Endothelial cell of umbilical vein (primary cell): ENCODE measurements at regions of chr13 and their contacts with region 1.

Region 1: GRCh38 chr13:37656247-37656940 is 57.8 kb upstream of the POSTN start:
- DNase-seq: peak; percentile 86
- H3K4me3 ChIP-seq: no peak overlapping the region
- H3K27ac ChIP-seq: peak overlapping the region; percentile 99
- H3K4me1 ChIP-seq: peaks cover 23% of the 10 kb centered on the region
- H3K27me3 ChIP-seq: no peaks in the 10 kb centered on the region
- CTCF ChIP-seq: no peak
- POLR2A ChIP-seq: no peak

Region 2: GRCh38 chr13:37617161-37617560 is 39.2 kb before region 1 on chr13:
- CTCF ChIA-PET with region 1: no interaction called
- POLR2A ChIA-PET with region 1: no interaction called
- dilution Hi-C with region 1: no loop called
- intact Hi-C with region 1: loop called (anchors 2 kb)
- DNase-seq: peak; percentile 59
- H3K4me3 ChIP-seq: no peak overlapping the region
- H3K27ac ChIP-seq: peak overlapping the region; percentile 70
- H3K4me1 ChIP-seq: peaks cover 8% of the 10 kb centered on the region
- H3K27me3 ChIP-seq: no peaks in the 10 kb centered on the region
- CTCF ChIP-seq: no peak
- POLR2A ChIP-seq: no peak

Region 3: GRCh38 chr13:37701972-37702371 is 45.6 kb after region 1 on chr13:
- CTCF ChIA-PET with region 1: interaction called, 5 read pairs
- POLR2A ChIA-PET with region 1: no interaction called
- dilution Hi-C with region 1: no loop called
- intact Hi-C with region 1: loop called (anchors 1 kb)
- DNase-seq: peak; percentile 51
- H3K4me3 ChIP-seq: no peak overlapping the region
- H3K27ac ChIP-seq: peak overlapping the region; percentile 95
- H3K4me1 ChIP-seq: peaks cover 24% of the 10 kb centered on the region
- H3K27me3 ChIP-seq: no peaks in the 10 kb centered on the region
- CTCF ChIP-seq: no peak
- POLR2A ChIP-seq: no peak

Region 4: GRCh38 chr13:37715606-37716015 is 59.2 kb after region 1 on chr13:
- CTCF ChIA-PET with region 1: no interaction called
- POLR2A ChIA-PET with region 1: interaction called, 4 read pairs
- dilution Hi-C with region 1: no loop called
- intact Hi-C with region 1: loop called (anchors 1 kb)
- DNase-seq: peak; percentile 93
- H3K4me3 ChIP-seq: no peak overlapping the region
- H3K27ac ChIP-seq: peak overlapping the region; percentile 90
- H3K4me1 ChIP-seq: peaks cover 28% of the 10 kb centered on the region
- H3K27me3 ChIP-seq: no peaks in the 10 kb centered on the region
- CTCF ChIP-seq: no peak
- POLR2A ChIP-seq: peak; percentile 32

Region 5: GRCh38 chr13:37747071-37747612 is 90.7 kb after region 1 on chr13:
- CTCF ChIA-PET with region 1: no interaction called
- POLR2A ChIA-PET with region 1: no interaction called
- dilution Hi-C with region 1: no loop called
- intact Hi-C with region 1: loop called (anchors 1 kb)
- DNase-seq: peak; percentile 84
- H3K4me3 ChIP-seq: no peak overlapping the region
- H3K27ac ChIP-seq: peak overlapping the region; percentile 61
- H3K4me1 ChIP-seq: peaks cover 16% of the 10 kb centered on the region
- H3K27me3 ChIP-seq: no peaks in the 10 kb centered on the region
- CTCF ChIP-seq: no peak
- POLR2A ChIP-seq: no peak

Region 6: DNA sequence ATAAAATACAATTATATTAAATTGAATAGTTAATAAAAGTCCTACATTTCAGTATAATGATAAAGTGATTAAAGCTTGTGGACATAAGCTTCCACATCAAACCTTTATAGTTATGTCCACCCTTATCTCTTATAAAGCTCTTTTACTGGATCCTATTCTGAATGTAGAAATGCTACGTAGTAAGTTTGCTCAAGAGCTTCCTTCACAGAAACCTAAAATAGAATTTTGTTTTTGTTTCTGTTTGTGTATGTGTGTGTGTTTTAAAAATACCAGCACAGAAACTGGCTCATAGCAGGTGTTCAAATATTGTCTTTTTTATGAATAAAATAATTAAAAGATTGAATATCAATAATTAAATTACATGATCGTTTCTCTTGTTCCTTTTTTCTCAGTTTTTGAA is 672.3 kb after region 1 on chr13:
- CTCF ChIA-PET with region 1: no interaction called
- POLR2A ChIA-PET with region 1: no interaction called
- dilution Hi-C with region 1: no loop called
- intact Hi-C with region 1: no loop called
- DNase-seq: no peak
- H3K4me3 ChIP-seq: no peak overlapping the region
- H3K27ac ChIP-seq: no peak overlapping the region
- H3K4me1 ChIP-seq: no peaks in the 10 kb centered on the region
- H3K27me3 ChIP-seq: no peaks in the 10 kb centered on the region
- CTCF ChIP-seq: no peak
- POLR2A ChIP-seq: no peak